Activated CD4-positive, alpha-beta T cell treated with anti-CD3 and anti-CD28 coated beads for 36 hours (primary cell): ENCODE measurements at regions of chrX and their contacts with region 1.

Region 1: GRCh38 chrX:39730662-39731397 is 366.9 kb downstream of the BCOR start:
- DNase-seq: peak; percentile 76
- ATAC-seq: peak; percentile 92
- H3K4me3 Mint-ChIP-seq: peak overlapping the region; percentile 5
- H3K27ac Mint-ChIP-seq: peak overlapping the region; percentile 71
- H3K4me1 Mint-ChIP-seq: peaks cover 17% of the 10 kb centered on the region
- H3K27me3 Mint-ChIP-seq: no peaks in the 10 kb centered on the region

Region 2: GRCh38 chrX:38578167-38578566 is 1152.7 kb before region 1 on chrX:
- CTCF ChIA-PET with region 1: no interaction called
- POLR2A ChIA-PET with region 1: no interaction called
- intact Hi-C with region 1: no loop called
- DNase-seq: no peak
- ATAC-seq: no peak
- H3K4me3 Mint-ChIP-seq: no peak overlapping the region
- H3K27ac Mint-ChIP-seq: no peak overlapping the region
- H3K4me1 Mint-ChIP-seq: no peaks in the 10 kb centered on the region
- H3K27me3 Mint-ChIP-seq: no peaks in the 10 kb centered on the region

Region 3: GRCh38 chrX:39777623-39778025 is 46.8 kb after region 1 on chrX:
- CTCF ChIA-PET with region 1: interaction called, 3 read pairs
- POLR2A ChIA-PET with region 1: no interaction called
- intact Hi-C with region 1: loop called (anchors 2 to 5 kb)
- DNase-seq: peak; percentile 67
- ATAC-seq: peak; percentile 57
- H3K4me3 Mint-ChIP-seq: no peak overlapping the region
- H3K27ac Mint-ChIP-seq: peak overlapping the region; percentile 95
- H3K4me1 Mint-ChIP-seq: peaks cover 43% of the 10 kb centered on the region
- H3K27me3 Mint-ChIP-seq: no peaks in the 10 kb centered on the region

Region 4: GRCh38 chrX:39805825-39806224 is 75.0 kb after region 1 on chrX:
- CTCF ChIA-PET with region 1: interaction called, 3 read pairs
- POLR2A ChIA-PET with region 1: no interaction called
- intact Hi-C with region 1: loop called in 1 of 2 experiments (anchors 1 kb)
- DNase-seq: peak; percentile 26
- ATAC-seq: peak; percentile 47
- H3K4me3 Mint-ChIP-seq: no peak overlapping the region
- H3K27ac Mint-ChIP-seq: peak overlapping the region; percentile 65
- H3K4me1 Mint-ChIP-seq: peaks cover 23% of the 10 kb centered on the region
- H3K27me3 Mint-ChIP-seq: no peaks in the 10 kb centered on the region

Region 5: DNA sequence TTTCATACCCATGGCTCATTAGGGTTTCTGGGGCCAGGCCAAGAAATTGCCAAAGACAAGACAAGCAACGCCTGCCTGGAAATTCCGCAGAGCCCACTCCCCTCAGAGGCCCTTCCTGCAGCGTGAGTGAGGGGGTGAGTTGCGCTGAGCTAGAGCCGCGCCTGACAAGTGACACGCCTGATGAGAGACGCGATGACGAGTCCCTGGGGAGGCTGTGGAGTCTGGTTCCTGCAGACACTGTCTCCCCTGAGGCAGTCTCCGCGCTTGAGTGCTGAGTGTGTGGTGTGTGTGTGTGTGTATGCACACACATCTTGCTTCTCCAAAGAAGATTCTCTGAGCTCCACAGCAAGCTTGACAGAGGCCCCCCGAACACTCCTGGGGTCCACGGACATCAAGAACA is 97.1 kb after region 1 on chrX:
- CTCF ChIA-PET with region 1: no interaction called
- POLR2A ChIA-PET with region 1: no interaction called
- intact Hi-C with region 1: no loop called
- DNase-seq: no peak
- ATAC-seq: no peak
- H3K4me3 Mint-ChIP-seq: no peak overlapping the region
- H3K27ac Mint-ChIP-seq: no peak overlapping the region
- H3K4me1 Mint-ChIP-seq: no peaks in the 10 kb centered on the region
- H3K27me3 Mint-ChIP-seq: peaks cover 4% of the 10 kb centered on the region

Region 6: GRCh38 chrX:39854772-39855747 is 124.2 kb after region 1 on chrX:
- CTCF ChIA-PET with region 1: interaction called, 5 read pairs
- POLR2A ChIA-PET with region 1: interaction called, 10 read pairs
- intact Hi-C with region 1: loop called in 1 of 2 experiments (anchors 5 kb)
- DNase-seq: peak; percentile 86
- ATAC-seq: peak; percentile 84
- H3K4me3 Mint-ChIP-seq: peak overlapping the region; percentile 80
- H3K27ac Mint-ChIP-seq: peak overlapping the region; percentile 98
- H3K4me1 Mint-ChIP-seq: peaks cover 79% of the 10 kb centered on the region
- H3K27me3 Mint-ChIP-seq: no peaks in the 10 kb centered on the region

Region 7: DNA sequence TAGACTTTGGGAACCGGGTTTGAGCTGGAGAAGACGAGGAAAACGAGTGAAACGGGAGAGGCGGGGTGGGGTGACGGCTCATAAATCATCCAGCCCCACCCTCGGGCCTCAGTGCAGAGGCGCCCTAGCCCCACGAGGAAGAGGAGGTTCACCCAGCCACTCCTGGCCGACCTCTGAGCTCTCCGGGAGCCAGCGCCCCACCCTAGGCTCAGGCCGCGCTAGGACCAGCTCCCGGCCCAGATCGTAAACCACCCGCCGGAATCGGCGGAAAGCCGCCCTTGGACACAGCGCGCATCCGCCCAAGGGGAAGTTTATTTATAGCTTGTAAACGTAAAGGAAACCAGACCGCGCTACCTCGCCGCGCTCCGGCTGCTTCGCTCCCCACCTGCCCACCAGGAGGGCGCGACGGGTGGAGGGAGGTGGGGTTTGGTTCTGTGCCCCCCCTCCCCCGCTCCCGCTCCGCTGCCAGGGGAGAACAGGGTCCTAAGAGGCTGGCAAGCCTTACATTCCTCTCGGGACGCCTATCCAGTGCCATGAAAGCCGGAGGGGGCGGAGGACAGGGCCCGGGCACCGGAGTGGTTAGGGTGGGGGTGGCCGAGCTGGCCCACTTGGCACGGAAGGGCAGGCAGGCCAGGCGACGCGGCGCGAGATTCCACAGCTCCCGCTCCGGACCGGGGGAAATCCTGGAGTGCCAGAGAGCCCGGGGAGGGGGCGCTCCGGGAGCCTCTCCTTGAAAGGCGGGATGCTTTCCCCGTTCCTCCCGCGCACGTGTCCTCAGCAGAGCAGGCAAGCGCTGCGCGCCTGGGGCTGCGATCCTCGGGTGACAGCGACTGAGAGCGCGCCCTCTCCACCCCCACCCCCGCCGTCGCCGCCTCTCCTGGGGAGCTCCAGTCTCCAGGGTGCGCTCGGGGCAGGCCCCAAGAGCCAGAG is 282.7 kb after region 1 on chrX:
- CTCF ChIA-PET with region 1: no interaction called
- POLR2A ChIA-PET with region 1: no interaction called
- intact Hi-C with region 1: loop called in 1 of 2 experiments (anchors 5 kb)
- DNase-seq: peak; percentile 58
- ATAC-seq: peak; percentile 35
- H3K4me3 Mint-ChIP-seq: peak overlapping the region; percentile 63
- H3K27ac Mint-ChIP-seq: peak overlapping the region; percentile 31
- H3K4me1 Mint-ChIP-seq: peaks cover 25% of the 10 kb centered on the region
- H3K27me3 Mint-ChIP-seq: peaks cover 16% of the 10 kb centered on the region

Region 8: DNA sequence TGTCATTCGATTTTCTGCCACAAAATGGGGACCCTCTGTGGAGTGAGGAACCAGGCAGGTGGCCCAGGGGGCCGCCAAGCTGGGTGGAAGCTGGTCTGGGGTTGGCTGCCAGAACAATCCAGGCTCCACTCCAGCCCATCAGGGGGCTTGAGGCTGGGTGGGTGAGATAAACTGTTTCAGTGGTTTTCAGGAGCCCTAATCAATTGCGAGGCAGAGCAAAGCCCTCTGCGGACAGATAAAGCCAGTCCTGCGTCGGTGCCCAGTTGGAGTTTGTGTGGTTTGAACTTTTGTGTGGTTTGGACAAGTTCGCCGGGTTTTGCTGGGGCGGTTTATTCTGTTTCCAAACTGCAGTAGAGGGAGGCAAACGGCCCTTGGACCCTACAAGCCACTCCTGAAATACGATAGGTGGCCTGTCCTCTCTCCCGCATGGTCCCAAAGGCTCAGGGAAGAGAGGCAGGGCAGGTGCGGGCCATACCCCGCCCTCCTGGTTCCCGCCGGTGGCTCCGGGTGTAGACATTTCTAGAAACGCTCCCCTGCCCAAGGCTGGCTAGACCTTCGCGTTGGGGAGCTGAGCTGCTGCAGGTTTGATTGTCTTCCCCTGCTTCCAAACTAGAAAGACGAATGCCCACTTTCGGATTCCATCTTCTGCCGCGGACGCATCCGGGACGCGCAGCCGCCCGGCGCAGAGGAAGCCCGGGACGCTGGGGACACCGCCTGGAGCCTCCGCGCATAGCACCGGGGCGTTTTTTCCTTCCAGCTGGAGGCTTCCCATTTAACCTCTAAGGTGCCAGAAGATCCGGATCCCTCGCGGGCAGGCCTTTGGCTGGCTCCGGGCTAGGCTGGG is 535.9 kb after region 1 on chrX:
- CTCF ChIA-PET with region 1: interaction called, 3 read pairs
- POLR2A ChIA-PET with region 1: no interaction called
- intact Hi-C with region 1: loop called in 1 of 2 experiments (anchors 10 kb)
- DNase-seq: peak; percentile 74
- ATAC-seq: peak; percentile 88
- H3K4me3 Mint-ChIP-seq: peak overlapping the region; percentile 60
- H3K27ac Mint-ChIP-seq: peak overlapping the region; percentile 63
- H3K4me1 Mint-ChIP-seq: peaks cover 13% of the 10 kb centered on the region
- H3K27me3 Mint-ChIP-seq: no peaks in the 10 kb centered on the region

Region 9: DNA sequence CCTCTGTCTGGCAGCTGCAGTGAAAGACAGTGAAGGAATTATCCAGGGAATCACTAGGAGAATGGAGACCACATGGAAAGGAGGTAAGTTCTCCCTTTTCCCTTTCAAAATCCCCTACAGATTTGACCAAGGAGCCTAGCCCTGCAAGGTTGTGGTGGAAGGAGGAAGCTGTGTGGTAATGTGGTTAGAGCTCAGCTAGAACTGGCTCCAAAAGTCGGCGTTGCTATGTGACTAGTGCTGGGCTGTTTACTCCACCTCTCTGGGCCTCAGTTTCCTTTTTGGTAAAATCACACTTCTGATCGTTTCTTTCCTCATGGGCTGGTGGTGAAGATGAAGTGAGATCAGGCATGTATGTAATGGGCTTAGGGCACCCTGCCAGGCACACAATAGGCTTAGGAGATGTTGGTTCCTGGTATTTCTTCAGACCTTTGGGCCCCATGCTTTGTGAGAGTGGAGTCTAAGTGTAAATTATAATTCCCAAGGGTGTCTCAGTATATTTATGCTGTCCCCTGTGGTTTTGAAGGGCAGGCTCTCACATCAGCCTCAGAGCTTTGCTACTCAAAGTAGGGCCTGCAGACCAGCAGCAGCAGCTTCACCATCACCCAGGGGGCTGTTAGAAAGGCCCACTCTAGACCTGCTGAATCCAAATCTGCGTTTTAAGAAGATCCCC is 550.6 kb after region 1 on chrX:
- CTCF ChIA-PET with region 1: no interaction called
- POLR2A ChIA-PET with region 1: no interaction called
- intact Hi-C with region 1: loop called in 1 of 2 experiments (anchors 10 kb)
- DNase-seq: peak; percentile 26
- ATAC-seq: peak; percentile 47
- H3K4me3 Mint-ChIP-seq: no peak overlapping the region
- H3K27ac Mint-ChIP-seq: no peak overlapping the region
- H3K4me1 Mint-ChIP-seq: peaks cover 25% of the 10 kb centered on the region
- H3K27me3 Mint-ChIP-seq: no peaks in the 10 kb centered on the region